Naive thymus-derived CD4-positive, alpha-beta T cell (primary cell): ENCODE measurements at regions of chr19 and their contacts with region 1.

Region 1: GRCh38 chr19:15812060-15812682 is 3.3 kb downstream of the OR10H1 start:
- DNase-seq: peak in 6 of 9 donors; percentile 28 to 71 (median 38)
- ATAC-seq: no peak
- H3K4me3 ChIP-seq: no peak overlapping the region
- H3K4me3 Mint-ChIP-seq: peak overlapping the region in 1 of 10 donors; percentile 3
- H3K27ac ChIP-seq: no peak overlapping the region
- H3K27ac Mint-ChIP-seq: peak overlapping the region in 4 of 9 donors; percentile 38 to 56 (median 48)
- H3K4me1 ChIP-seq: peaks cover 3 to 8% of the 10 kb centered on the region in 2 donors
- H3K4me1 Mint-ChIP-seq: peaks cover 2 to 24% (median 14%) of the 10 kb centered on the region in 7 donors
- H3K27me3 ChIP-seq: peaks cover 0 to 4% of the 10 kb centered on the region in 2 donors
- H3K27me3 Mint-ChIP-seq: peaks cover 6 to 27% (median 14%) of the 10 kb centered on the region in 5 donors

Region 2: DNA sequence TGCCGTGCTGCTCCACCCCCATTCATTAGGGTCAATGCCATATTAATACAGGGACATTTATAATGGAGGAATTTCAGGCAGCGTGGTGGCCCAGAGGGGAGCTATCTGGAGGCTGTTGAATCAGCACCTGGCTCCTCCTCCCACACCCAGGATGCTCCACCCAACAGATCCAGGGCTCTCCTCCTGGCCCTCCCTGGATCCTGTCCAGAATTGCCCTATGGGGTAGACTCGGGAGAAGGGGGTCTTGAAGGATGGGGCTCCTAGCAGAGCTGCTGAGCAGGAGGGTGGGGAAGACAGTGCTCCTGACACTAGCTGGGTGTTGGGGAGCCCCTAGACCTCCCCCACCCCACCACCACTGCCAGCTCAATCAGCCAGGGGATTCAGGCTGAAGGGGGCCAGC is 30.0 kb before region 1 on chr19:
- CTCF ChIA-PET with region 1: no interaction called
- POLR2A ChIA-PET with region 1: no interaction called
- intact Hi-C with region 1: no loop called
- DNase-seq: no peak
- ATAC-seq: no peak
- H3K4me3 ChIP-seq: no peak overlapping the region
- H3K4me3 Mint-ChIP-seq: no peak overlapping the region
- H3K27ac ChIP-seq: no peak overlapping the region
- H3K27ac Mint-ChIP-seq: no peak overlapping the region
- H3K4me1 ChIP-seq: no peaks in the 10 kb centered on the region
- H3K4me1 Mint-ChIP-seq: peaks cover 0 to 13% (median 3%) of the 10 kb centered on the region in 7 donors
- H3K27me3 ChIP-seq: no peaks in the 10 kb centered on the region
- H3K27me3 Mint-ChIP-seq: peaks cover 0 to 7% (median 4%) of the 10 kb centered on the region in 5 donors

Region 3: DNA sequence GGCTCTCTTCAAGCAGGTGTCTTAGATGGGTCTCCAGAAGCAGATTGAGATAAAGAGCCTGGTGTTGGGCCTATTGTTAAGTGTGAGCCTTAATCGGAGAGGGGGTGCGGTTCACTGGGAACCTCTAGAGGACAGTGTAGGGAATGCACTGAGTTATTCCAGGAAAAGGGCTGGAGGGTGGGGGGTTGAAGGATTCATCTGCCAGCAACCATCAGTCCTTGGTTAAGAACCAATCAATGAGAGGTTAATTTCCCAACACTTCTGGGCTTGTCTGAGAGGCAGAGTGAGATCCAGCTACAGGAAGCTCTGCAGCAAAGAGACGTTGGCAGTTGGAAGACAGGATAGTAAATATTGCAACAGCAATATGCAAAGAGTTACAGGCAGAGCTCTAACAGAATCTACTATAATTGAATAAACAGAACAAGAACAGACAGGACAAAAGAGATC is 57.0 kb after region 1 on chr19:
- CTCF ChIA-PET with region 1: interaction called, 6 read pairs
- POLR2A ChIA-PET with region 1: no interaction called
- intact Hi-C with region 1: loop called in 1 of 2 experiments (anchors 1 kb)
- DNase-seq: peak in 7 of 9 donors; percentile 24 to 55 (median 45)
- ATAC-seq: peak; percentile 89
- H3K4me3 ChIP-seq: no peak overlapping the region
- H3K4me3 Mint-ChIP-seq: no peak overlapping the region
- H3K27ac ChIP-seq: no peak overlapping the region
- H3K27ac Mint-ChIP-seq: peak overlapping the region in 2 of 9 donors; percentile 0 to 12
- H3K4me1 ChIP-seq: peaks cover 4 to 5% of the 10 kb centered on the region in 2 donors
- H3K4me1 Mint-ChIP-seq: peaks cover 5 to 20% (median 12%) of the 10 kb centered on the region in 7 donors
- H3K27me3 ChIP-seq: no peaks in the 10 kb centered on the region
- H3K27me3 Mint-ChIP-seq: peaks cover 6 to 13% (median 9%) of the 10 kb centered on the region in 5 donors